B cell (primary cell): ENCODE measurements at regions of chr2 and their contacts with region 1.

Region 1: DNA sequence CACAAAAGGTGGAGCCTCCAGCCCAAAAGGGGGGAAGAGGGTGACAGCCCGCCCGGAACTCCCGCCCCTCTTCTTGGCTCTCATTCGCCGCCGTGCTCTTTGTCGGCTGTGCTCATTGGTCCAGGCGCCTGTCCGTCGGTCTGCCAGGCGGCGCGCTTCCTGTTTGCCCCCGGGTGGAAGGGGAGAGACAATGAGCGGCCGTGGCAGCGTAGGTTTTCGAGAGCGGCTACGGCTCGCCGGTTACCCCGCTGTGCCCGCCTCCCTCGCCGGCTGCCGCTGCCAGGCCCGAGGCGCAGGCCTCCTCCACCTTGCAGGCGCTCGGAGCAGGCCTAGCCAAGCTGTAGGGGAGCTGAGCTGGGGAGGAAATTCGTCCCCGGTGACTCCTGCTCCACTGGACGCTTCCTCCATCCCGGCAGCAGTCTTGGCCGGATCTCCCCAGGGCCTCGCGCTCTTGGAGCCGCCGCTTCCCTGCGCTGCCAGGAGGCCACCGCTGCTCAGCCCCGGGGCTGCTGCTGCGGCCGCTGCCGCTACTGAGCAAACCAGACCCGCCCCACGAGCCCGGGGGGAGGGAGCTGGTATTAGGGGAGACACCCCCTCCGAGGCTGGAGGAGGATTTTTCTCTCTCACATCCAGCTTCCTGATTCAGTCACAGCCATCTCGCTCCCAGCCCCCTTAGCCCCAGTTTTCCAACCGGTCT is at the start of gene SP3:
- DNase-seq: peak; percentile 97
- ATAC-seq: peak; percentile 62
- H3K4me3 ChIP-seq: peak within 1 kb of the TSS; percentile 84 to 98 (median 92)
- H3K4me3 Mint-ChIP-seq: peak within 1 kb of the TSS; percentile 93
- H3K27ac ChIP-seq: peak within 1 kb of the TSS; percentile 94 to 98
- H3K27ac Mint-ChIP-seq: peak within 1 kb of the TSS; percentile 95
- H3K4me1 ChIP-seq: peaks cover 24 to 28% of the 10 kb centered on the region in 2 donors
- H3K4me1 Mint-ChIP-seq: peaks cover 32% of the 10 kb centered on the region
- H3K27me3 ChIP-seq: no peaks in the 10 kb centered on the region
- H3K27me3 Mint-ChIP-seq: no peaks in the 10 kb centered on the region
- CTCF ChIP-seq: no peak
- total RNA-seq, gene SP3: 152 and 164 TPM in 2 replicates

Region 2: DNA sequence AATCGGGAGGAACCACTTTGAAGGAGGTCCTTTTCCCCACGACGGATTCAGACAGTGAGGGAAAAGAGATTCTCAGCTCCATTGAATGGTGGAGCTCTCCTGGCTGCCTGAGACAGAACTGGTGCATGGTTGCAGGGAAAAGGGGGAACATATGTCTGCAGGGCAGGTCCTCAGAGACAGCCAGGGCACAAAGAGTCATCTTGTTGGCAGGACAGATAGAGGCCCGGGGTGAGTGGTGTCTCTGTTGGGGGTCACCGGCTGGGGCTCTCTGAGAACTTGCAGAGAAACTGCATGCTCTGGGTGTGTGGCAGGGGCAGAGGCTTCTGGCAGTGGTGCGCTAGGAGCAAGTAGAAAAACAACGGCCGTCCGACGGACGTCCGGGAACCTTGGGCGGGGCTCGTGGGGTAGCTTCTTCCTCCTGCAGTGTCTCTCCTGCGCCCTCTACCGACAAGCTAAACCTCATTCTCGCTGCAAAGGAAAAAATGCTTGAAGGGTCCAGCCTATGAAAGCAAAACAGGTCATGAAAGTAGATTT is 516.5 kb before region 1 on chr2:
- CTCF ChIA-PET with region 1: no interaction called
- POLR2A ChIA-PET with region 1: no interaction called
- intact Hi-C with region 1: no loop called
- DNase-seq: peak; percentile 53
- ATAC-seq: peak; percentile 62
- H3K4me3 ChIP-seq: peak overlapping the region in 2 of 5 experiments; percentile 8 to 24
- H3K4me3 Mint-ChIP-seq: peak overlapping the region; percentile 62
- H3K27ac ChIP-seq: no peak overlapping the region
- H3K27ac Mint-ChIP-seq: no peak overlapping the region
- H3K4me1 ChIP-seq: no peaks in the 10 kb centered on the region
- H3K4me1 Mint-ChIP-seq: peaks cover 4% of the 10 kb centered on the region
- H3K27me3 ChIP-seq: peaks cover 0 to 6% (median 0%) of the 10 kb centered on the region in 4 experiments
- H3K27me3 Mint-ChIP-seq: peaks cover 26% of the 10 kb centered on the region
- CTCF ChIP-seq: peak; percentile 63

Region 3: DNA sequence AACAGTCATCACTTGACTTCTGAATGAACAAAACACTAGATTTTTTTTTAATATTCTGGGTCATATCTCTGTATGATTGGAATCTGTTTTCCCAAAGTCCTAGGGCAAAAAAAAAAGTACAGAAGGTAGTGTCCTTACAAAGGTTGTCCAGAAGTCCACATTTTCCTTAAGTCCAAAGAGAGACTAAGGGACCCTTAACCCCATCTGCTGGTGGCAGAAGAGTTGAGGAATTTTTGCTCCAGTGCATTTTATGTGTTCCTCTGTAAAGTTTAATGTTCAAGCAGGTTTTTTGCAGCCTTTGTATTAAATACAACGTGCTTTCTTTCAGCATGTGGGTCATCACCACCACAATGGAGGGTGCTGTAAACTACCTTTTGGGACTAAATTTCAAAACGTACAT is 216.2 kb before region 1 on chr2:
- CTCF ChIA-PET with region 1: no interaction called
- POLR2A ChIA-PET with region 1: no interaction called
- intact Hi-C with region 1: no loop called
- DNase-seq: no peak
- ATAC-seq: no peak
- H3K4me3 ChIP-seq: no peak overlapping the region
- H3K4me3 Mint-ChIP-seq: no peak overlapping the region
- H3K27ac ChIP-seq: no peak overlapping the region
- H3K27ac Mint-ChIP-seq: no peak overlapping the region
- H3K4me1 ChIP-seq: no peaks in the 10 kb centered on the region
- H3K4me1 Mint-ChIP-seq: no peaks in the 10 kb centered on the region
- H3K27me3 ChIP-seq: peaks cover 0 to 6% (median 2%) of the 10 kb centered on the region in 4 experiments
- H3K27me3 Mint-ChIP-seq: peaks cover 23% of the 10 kb centered on the region
- CTCF ChIP-seq: no peak

Region 4: DNA sequence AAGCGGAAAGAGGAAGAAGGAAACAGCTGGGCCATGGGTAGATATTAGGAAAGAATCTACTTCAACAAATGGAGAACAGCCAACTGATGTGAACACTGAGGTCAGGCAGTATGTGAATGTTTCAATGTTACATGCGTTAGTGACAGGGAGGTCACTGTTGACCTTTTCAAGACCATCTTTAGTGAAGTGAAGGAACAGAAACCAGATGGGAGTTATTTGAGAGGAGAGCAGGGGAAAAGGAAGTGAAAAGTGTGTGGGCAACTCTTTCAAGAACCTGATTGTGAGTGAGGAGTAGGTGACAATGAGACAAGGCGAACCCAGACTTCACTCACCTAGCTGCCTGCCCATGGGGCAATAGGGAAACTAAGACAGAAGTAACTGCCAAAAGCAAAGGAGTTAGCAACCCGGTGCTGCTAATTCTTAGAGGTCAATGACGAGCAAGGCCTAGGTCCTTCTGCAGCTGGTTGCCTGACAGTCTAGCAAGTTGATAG is 67.3 kb before region 1 on chr2:
- CTCF ChIA-PET with region 1: no interaction called
- POLR2A ChIA-PET with region 1: no interaction called
- intact Hi-C with region 1: loop called (anchors 5 kb)
- DNase-seq: peak; percentile 56
- ATAC-seq: peak; percentile 88
- H3K4me3 ChIP-seq: no peak overlapping the region
- H3K4me3 Mint-ChIP-seq: peak overlapping the region; percentile 35
- H3K27ac ChIP-seq: peak overlapping the region in 1 of 2 donors; percentile 39
- H3K27ac Mint-ChIP-seq: peak overlapping the region; percentile 54
- H3K4me1 ChIP-seq: peaks cover 15 to 23% of the 10 kb centered on the region in 2 donors
- H3K4me1 Mint-ChIP-seq: peaks cover 32% of the 10 kb centered on the region
- H3K27me3 ChIP-seq: no peaks in the 10 kb centered on the region
- H3K27me3 Mint-ChIP-seq: no peaks in the 10 kb centered on the region
- CTCF ChIP-seq: no peak

Region 5: GRCh38 chr2:173990970-173991819 is 25.7 kb after region 1 on chr2:
- CTCF ChIA-PET with region 1: interaction called, 3 read pairs
- POLR2A ChIA-PET with region 1: interaction called, 17 read pairs
- intact Hi-C with region 1: loop called (anchors 1 kb)
- DNase-seq: peak; percentile 66
- ATAC-seq: peak; percentile 93
- H3K4me3 ChIP-seq: peak overlapping the region in 3 of 5 experiments; percentile 9 to 38 (median 22)
- H3K4me3 Mint-ChIP-seq: peak overlapping the region; percentile 77
- H3K27ac ChIP-seq: peak overlapping the region; percentile 37 to 72
- H3K27ac Mint-ChIP-seq: peak overlapping the region; percentile 88
- H3K4me1 ChIP-seq: peaks cover 31 to 32% of the 10 kb centered on the region in 2 donors
- H3K4me1 Mint-ChIP-seq: peaks cover 38% of the 10 kb centered on the region
- H3K27me3 ChIP-seq: no peaks in the 10 kb centered on the region
- H3K27me3 Mint-ChIP-seq: no peaks in the 10 kb centered on the region
- CTCF ChIP-seq: no peak

Region 6: GRCh38 chr2:174039551-174040416 is 74.3 kb after region 1 on chr2:
- CTCF ChIA-PET with region 1: interaction called, 10 read pairs
- POLR2A ChIA-PET with region 1: interaction called, 4 read pairs
- intact Hi-C with region 1: loop called (anchors 1 kb)
- DNase-seq: peak; percentile 93
- ATAC-seq: peak; percentile 90
- H3K4me3 ChIP-seq: peak overlapping the region in 4 of 5 experiments; percentile 7 to 34 (median 19)
- H3K4me3 Mint-ChIP-seq: peak overlapping the region; percentile 72
- H3K27ac ChIP-seq: peak overlapping the region; percentile 87 to 94
- H3K27ac Mint-ChIP-seq: peak overlapping the region; percentile 96
- H3K4me1 ChIP-seq: peaks cover 11 to 23% of the 10 kb centered on the region in 2 donors
- H3K4me1 Mint-ChIP-seq: peaks cover 24% of the 10 kb centered on the region
- H3K27me3 ChIP-seq: peaks cover 0 to 5% (median 2%) of the 10 kb centered on the region in 4 experiments
- H3K27me3 Mint-ChIP-seq: no peaks in the 10 kb centered on the region
- CTCF ChIP-seq: peak; percentile 84

Region 7: DNA sequence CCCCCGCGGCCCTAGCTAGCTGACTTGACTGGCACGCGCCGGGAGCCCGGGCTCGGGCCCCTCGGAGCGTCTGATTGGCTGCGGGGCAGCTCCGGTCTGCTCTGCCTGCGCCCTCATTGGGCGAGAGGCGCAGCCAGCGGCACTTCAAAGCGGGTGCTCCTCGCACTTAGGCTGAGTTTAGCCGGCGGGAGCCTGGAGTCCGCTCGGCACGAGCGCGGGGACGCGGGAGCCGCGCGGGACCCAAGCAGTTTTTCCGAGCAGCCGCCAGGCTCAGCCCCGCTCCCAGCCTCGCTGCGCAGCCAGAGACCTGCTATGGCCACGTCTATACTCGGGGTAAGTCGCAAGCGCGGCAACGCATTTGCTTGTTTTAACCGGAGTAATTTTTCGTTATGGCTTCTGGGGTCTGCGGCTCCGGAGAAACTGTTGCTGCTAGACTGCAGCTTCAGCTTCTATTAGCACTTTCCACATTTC is 369.3 kb after region 1 on chr2 and contains the start of gene SP9:
- CTCF ChIA-PET with region 1: no interaction called
- POLR2A ChIA-PET with region 1: interaction called, 10 read pairs
- intact Hi-C with region 1: no loop called
- DNase-seq: no peak
- ATAC-seq: no peak
- H3K4me3 ChIP-seq: peak within 1 kb of the TSS in 3 of 5 experiments; percentile 33 to 43 (median 35)
- H3K4me3 Mint-ChIP-seq: peak within 1 kb of the TSS; percentile 71
- H3K27ac ChIP-seq: no peak within 1 kb of the TSS
- H3K27ac Mint-ChIP-seq: peak within 1 kb of the TSS; percentile 76
- H3K4me1 ChIP-seq: peaks cover 52 to 70% of the 10 kb centered on the region in 2 donors
- H3K4me1 Mint-ChIP-seq: peaks cover 26% of the 10 kb centered on the region
- H3K27me3 ChIP-seq: peaks cover 4 to 93% (median 81%) of the 10 kb centered on the region in 4 experiments
- H3K27me3 Mint-ChIP-seq: peaks cover 68% of the 10 kb centered on the region
- CTCF ChIP-seq: no peak
- total RNA-seq, gene SP9: not detected in 2 replicates

Region 8: GRCh38 chr2:175167792-175168563 is 1202.5 kb after region 1 on chr2 and contains the start of gene ATF2:
- CTCF ChIA-PET with region 1: no interaction called
- POLR2A ChIA-PET with region 1: no interaction called
- intact Hi-C with region 1: loop called (anchors 10 kb)
- DNase-seq: peak; percentile 99
- ATAC-seq: peak; percentile 91
- H3K4me3 ChIP-seq: peak within 1 kb of the TSS; percentile 93 to 98 (median 97)
- H3K4me3 Mint-ChIP-seq: peak within 1 kb of the TSS; percentile 99
- H3K27ac ChIP-seq: peak within 1 kb of the TSS; percentile 86 to 91
- H3K27ac Mint-ChIP-seq: peak within 1 kb of the TSS; percentile 93
- H3K4me1 ChIP-seq: peaks cover 5 to 21% of the 10 kb centered on the region in 2 donors
- H3K4me1 Mint-ChIP-seq: peaks cover 33% of the 10 kb centered on the region
- H3K27me3 ChIP-seq: no peaks in the 10 kb centered on the region
- H3K27me3 Mint-ChIP-seq: no peaks in the 10 kb centered on the region
- CTCF ChIP-seq: no peak
- total RNA-seq, gene ATF2: 66.8 and 69.9 TPM in 2 replicates